SK-N-SH (cell line): ENCODE measurements at regions of chr18 and their contacts with region 1.

Region 1: GRCh38 chr18:35756506-35757117 is 175.1 kb downstream of the GALNT1 start:
- DNase-seq: peak; percentile 67
- H3K4me3 ChIP-seq: no peak overlapping the region
- H3K27ac ChIP-seq: no peak overlapping the region
- H3K4me1 ChIP-seq: no peaks in the 10 kb centered on the region; a peak in 1 of 4 replicates
- H3K27me3 ChIP-seq: no peaks in the 10 kb centered on the region; the same call in 1 of the 2 replicates
- CTCF ChIP-seq: peak; percentile 84
- EP300 ChIP-seq: no peak
- RAD21 ChIP-seq: peak; percentile 94

Region 2: DNA sequence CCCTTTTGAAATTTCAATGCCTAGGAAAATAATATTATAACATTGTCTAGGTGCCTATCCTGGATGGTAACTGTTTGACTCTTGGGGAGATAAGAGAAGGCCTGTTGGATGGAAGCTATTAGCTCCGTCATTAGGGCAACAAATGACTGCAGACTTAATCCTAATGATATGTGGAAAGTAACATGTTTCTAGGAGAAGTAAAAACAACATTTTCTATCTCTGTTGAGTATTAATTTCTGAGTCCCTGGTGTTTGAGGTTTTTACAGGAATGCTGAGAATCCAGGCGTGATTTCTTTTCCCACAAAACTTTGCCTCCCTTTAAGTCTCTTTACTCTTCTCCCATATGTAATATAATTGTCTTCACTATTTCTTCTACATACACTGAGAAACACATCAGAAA is 16.0 kb before region 1 on chr18:
- CTCF ChIA-PET with region 1: interaction called, 13 read pairs
- POLR2A ChIA-PET with region 1: no interaction called
- DNase-seq: no peak
- H3K4me3 ChIP-seq: no peak overlapping the region
- H3K27ac ChIP-seq: no peak overlapping the region
- H3K4me1 ChIP-seq: no peaks in the 10 kb centered on the region
- H3K27me3 ChIP-seq: no peaks in the 10 kb centered on the region
- CTCF ChIP-seq: no peak
- EP300 ChIP-seq: no peak
- RAD21 ChIP-seq: no peak

Region 3: GRCh38 chr18:35775887-35776286 is 19.3 kb after region 1 on chr18:
- CTCF ChIA-PET with region 1: interaction called, 16 read pairs
- POLR2A ChIA-PET with region 1: no interaction called
- DNase-seq: no peak
- H3K4me3 ChIP-seq: no peak overlapping the region
- H3K27ac ChIP-seq: no peak overlapping the region
- H3K4me1 ChIP-seq: peaks cover 0 to 12% of the 10 kb centered on the region in 2 experiments; a peak in 1 of 4 replicates
- H3K27me3 ChIP-seq: no peaks in the 10 kb centered on the region
- CTCF ChIP-seq: no peak
- EP300 ChIP-seq: no peak
- RAD21 ChIP-seq: no peak

Region 4: GRCh38 chr18:35939138-35939537 is 182.5 kb after region 1 on chr18:
- CTCF ChIA-PET with region 1: interaction called, 18 read pairs
- POLR2A ChIA-PET with region 1: no interaction called
- DNase-seq: no peak
- H3K4me3 ChIP-seq: no peak overlapping the region
- H3K27ac ChIP-seq: no peak overlapping the region
- H3K4me1 ChIP-seq: no peaks in the 10 kb centered on the region; a peak in 1 of 4 replicates
- H3K27me3 ChIP-seq: no peaks in the 10 kb centered on the region
- CTCF ChIP-seq: peak; percentile 16; the same call in 1 of the 2 replicates
- EP300 ChIP-seq: no peak
- RAD21 ChIP-seq: no peak; the same call in 1 of the 2 replicates

Region 5: DNA sequence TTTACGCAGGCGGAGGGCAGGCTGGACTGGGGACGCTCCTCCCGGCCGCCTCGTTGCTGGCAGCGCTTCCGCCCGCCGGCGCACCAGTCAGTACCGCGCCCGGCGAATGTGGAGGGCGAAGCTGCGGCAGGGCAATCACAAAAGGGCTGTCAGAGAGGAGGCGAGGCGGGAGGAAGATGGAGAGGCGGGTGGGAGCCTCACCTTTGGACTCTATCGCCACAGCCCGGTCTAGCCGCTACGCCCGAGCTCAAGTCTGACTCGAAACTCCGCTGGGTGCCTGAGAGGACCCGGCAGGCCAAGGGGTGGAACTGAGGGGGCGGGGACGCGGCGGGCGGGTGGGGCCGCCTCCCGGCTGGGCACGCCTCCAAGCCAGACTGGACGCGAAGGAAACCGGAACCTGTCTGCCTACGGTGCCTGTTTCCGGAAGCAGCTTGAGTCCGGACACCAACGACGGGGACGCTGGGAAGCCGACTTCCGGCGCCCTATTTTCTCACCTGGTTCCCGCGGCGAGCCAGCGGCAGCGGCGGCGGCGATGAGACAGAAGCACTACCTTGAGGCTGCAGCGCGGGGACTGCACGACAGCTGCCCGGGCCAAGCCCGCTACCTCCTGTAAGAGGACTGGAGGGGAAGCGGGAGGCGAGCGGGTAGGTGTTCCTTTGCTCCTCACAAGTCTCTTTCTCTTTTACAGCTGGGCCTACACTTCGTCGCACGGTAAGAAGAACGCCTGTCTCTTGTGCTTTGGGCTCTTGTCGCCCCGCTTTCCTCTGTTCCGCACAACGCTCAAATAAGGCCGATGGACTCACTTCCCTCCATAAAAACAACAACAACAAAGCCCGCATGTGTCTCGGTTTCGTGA is 215.8 kb after region 1 on chr18 and contains the start of gene RMP24:
- CTCF ChIA-PET with region 1: interaction called, 12 read pairs
- POLR2A ChIA-PET with region 1: no interaction called
- DNase-seq: peak; percentile 97
- H3K4me3 ChIP-seq: peak within 1 kb of the TSS; percentile 94 to 98
- H3K27ac ChIP-seq: peak within 1 kb of the TSS; percentile 81 to 95
- H3K4me1 ChIP-seq: peaks cover 4 to 7% of the 10 kb centered on the region in 2 experiments; a peak in 3 of 4 replicates
- H3K27me3 ChIP-seq: no peaks in the 10 kb centered on the region
- CTCF ChIP-seq: no peak
- EP300 ChIP-seq: no peak
- RAD21 ChIP-seq: no peak